Aorta (tissue), 5 donors: ENCODE measurements at regions of chr21 and their contacts with region 1.

Region 1: GRCh38 chr21:18070392-18070791 is 174.2 kb upstream of the CHODL start:
- DNase-seq: no peak
- ATAC-seq: no peak
- H3K4me3 ChIP-seq: no peak overlapping the region
- H3K27ac ChIP-seq: no peak overlapping the region
- H3K4me1 ChIP-seq: no peaks in the 10 kb centered on the region
- H3K27me3 ChIP-seq: no peaks in the 10 kb centered on the region

Region 2: DNA sequence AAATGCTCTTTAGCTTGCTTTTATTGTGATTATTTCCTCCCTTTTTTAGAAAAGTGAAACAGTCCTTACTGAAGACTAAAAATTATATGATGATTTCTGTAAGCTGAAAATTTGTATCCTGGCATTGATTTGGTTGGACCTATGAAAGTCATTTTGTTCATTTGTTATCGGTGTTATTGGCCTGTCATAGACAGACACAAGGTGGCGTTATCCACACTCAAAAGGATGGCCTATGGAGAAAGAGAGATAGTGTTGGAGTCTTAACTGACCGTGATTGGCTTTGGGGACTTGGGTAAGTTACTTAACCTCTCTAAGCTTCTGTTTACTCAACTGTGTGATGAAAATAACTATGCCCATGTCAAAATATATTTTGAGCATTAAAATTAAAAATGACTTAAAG is 29.4 kb before region 1 on chr21:
- intact Hi-C with region 1: loop called in 1 of 2 experiments (anchors 2 kb)
- DNase-seq: no peak
- ATAC-seq: peak; percentile 66
- H3K4me3 ChIP-seq: no peak overlapping the region
- H3K27ac ChIP-seq: no peak overlapping the region
- H3K4me1 ChIP-seq: no peaks in the 10 kb centered on the region
- H3K27me3 ChIP-seq: no peaks in the 10 kb centered on the region

Region 3: DNA sequence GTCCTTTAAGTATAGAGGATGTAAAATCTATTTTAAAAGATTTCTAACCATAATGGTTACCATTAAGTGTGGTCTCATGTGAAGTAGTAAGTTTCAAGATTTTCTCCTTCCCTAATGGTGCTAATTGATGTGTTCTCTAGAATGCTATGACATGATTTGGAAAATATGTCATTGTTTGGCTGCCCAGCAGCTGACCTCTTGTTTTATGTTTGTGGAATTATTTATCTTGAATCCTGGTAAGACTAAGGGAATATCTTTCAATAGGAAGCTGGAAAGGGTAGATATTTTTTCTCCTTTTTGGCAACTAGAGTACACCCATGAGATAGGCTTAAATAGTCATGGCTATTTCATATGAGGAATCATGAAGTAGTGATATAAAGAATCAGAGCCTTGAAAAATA is 34.4 kb after region 1 on chr21:
- intact Hi-C with region 1: no loop called
- DNase-seq: no peak
- ATAC-seq: peak; percentile 26
- H3K4me3 ChIP-seq: no peak overlapping the region
- H3K27ac ChIP-seq: no peak overlapping the region
- H3K4me1 ChIP-seq: no peaks in the 10 kb centered on the region
- H3K27me3 ChIP-seq: no peaks in the 10 kb centered on the region

Region 4: GRCh38 chr21:18350216-18350615 is 279.8 kb after region 1 on chr21:
- intact Hi-C with region 1: no loop called
- DNase-seq: no peak
- ATAC-seq: no peak
- H3K4me3 ChIP-seq: no peak overlapping the region
- H3K27ac ChIP-seq: no peak overlapping the region
- H3K4me1 ChIP-seq: no peaks in the 10 kb centered on the region
- H3K27me3 ChIP-seq: no peaks in the 10 kb centered on the region